ENCODE measurements at regions of chr3 and their contacts with region 1.

Region 1: GRCh38 chr3:107421170-107421792 is 44.0 kb downstream of the CCDC54 start:
- DNase-seq: no peak

Region 2: DNA sequence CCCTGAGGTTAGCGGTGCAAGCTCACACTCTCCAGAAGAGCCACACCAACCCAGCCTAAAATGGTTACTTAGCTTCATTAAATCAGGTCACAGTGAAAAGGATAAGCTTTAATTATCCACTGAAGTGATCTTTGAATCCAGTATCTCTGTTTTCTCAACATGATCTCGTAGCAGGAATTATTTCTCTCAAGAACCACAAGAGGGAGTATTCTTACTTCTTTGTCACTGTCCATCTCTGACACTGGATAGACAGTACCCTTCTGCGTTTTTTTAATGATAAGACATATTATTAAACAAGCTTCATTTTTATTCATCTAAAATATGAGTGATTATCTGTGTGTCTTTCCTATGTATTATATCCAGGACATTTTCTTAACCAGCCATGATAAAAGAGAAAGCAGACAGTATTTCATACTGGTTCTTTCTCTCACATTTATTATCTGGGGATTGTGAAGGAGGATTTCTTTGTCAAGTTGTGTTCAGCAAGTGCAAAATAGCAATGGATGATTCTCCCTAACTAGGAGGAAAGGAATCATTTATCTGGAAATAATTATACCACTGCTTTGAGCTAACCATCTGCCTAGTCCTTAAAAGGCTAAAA is 149.4 kb before region 1 on chr3:
- intact Hi-C with region 1: loop called (anchors 1 kb)
- DNase-seq: no peak

Region 3: DNA sequence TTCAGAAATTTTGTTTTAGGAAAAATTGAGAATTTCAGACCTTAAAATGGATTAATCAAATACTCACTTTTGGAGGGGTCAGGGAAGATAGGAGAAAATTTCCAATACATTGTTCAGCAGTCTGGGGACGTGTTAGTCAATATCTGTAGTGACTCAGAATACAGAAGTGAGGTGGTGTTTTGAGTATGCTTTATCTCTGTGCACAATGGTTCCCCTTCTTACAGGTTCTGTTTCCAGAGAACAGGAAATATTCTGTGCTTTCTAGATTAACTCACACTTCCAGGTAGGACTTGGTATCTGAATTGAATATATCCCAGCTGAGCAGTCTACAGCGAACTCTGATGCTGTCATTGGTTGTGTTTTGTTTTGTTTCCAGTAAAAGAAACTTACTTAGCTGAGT is 74.7 kb before region 1 on chr3:
- intact Hi-C with region 1: loop called (anchors 5 kb)
- DNase-seq: no peak

Region 4: GRCh38 chr3:107387555-107387954 is 33.7 kb before region 1 on chr3:
- intact Hi-C with region 1: loop called (anchors 2 kb)
- DNase-seq: no peak

Measured in posterior cingulate gyrus (tissue), 11 donors.